GM12878 (cell line): ENCODE measurements at regions of chr6 and their contacts with region 1.

Region 1: DNA sequence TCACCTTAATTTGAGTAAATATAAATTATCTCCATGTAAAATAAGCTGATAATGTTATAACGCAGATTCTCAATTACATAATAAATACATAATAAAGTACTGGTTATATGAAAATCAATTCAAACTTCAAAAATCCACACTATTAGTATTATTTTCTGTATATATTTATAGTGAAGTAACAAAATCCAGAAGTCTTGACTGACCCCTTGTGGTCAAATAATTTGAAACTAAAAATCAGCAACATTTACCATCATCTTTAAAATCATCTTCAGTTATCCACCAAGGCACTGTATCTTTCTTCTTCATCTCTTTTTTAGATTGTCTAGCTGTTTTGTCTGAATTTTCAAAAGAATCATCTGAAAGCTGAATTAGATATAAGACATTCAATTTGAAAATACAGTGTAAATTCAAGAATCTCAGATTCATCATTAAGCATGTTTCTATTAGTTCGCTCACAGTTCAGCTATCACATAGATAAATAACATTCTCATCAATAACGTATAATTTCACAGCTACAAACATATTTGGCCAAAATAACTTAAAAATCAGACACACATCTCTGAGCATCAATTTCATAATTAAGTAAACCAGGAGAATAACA is 6.5 kb downstream of the CEP162 start:
- DNase-seq: no peak
- ATAC-seq: 0 out of 3 replicates have a peak, but pooled peaks have one; percentile 39
- H3K4me3 ChIP-seq: no peak overlapping the region
- H3K27ac ChIP-seq: no peak overlapping the region
- H3K4me1 ChIP-seq: no peaks in the 10 kb centered on the region
- H3K27me3 ChIP-seq: no peaks in the 10 kb centered on the region
- CTCF ChIP-seq: peak; percentile 30 to 52 (median 36); a peak in 3 of 6 replicates
- EP300 ChIP-seq: no peak
- POLR2A ChIP-seq: no peak
- RAD21 ChIP-seq: peak; percentile 64

Region 2: DNA sequence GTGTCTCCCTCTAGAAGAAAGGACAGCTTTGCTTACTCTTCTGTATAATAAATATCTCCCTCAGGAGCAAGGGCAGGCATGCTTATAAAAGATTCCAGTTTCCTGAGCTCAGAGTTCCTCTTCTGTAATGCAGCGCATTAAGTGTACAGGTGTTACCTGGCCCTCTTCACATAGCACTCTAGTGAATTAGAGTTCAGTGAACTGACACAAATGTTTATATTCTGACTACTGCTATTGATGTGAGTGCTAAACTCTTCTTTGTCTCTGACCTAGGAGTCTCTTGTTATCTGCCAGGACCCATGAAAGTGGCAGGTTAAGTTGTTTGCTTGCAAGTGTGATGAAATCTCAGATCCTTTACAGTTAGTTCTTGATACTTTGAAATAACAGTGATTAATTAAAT is 327.9 kb before region 1 on chr6:
- CTCF ChIA-PET with region 1: interaction called, 10 read pairs
- POLR2A ChIA-PET with region 1: no interaction called
- RAD21 ChIA-PET with region 1: interaction called, 5 read pairs
- SMC1A ChIA-PET with region 1: interaction called, 4 read pairs
- in situ Hi-C with region 1: loop called (anchors 5 kb)
- intact Hi-C with region 1: no loop called
- DNase-seq: no peak
- ATAC-seq: no peak
- H3K4me3 ChIP-seq: no peak overlapping the region
- H3K27ac ChIP-seq: no peak overlapping the region
- H3K4me1 ChIP-seq: no peaks in the 10 kb centered on the region
- H3K27me3 ChIP-seq: no peaks in the 10 kb centered on the region
- CTCF ChIP-seq: no peak
- EP300 ChIP-seq: no peak
- POLR2A ChIP-seq: no peak
- RAD21 ChIP-seq: no peak

Region 3: DNA sequence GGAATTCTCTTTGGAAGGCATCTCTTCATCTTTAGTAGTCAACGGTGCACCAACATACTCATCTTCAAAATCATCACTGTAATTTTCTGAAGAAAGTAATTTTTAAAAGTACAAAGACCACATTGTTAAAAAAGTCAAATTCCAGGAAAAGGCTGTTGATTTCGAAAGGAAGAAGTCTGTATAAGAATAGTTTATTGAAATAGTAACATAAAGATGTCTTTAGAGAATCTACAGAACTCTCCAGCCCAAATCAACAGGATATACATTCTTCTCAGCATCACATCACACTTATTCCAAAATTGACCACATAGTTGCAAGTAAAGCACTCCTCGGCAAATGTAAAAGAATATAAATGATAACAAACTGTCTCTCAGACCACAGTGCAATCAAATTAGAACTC is 16.9 kb before region 1 on chr6:
- CTCF ChIA-PET with region 1: interaction called, 3 read pairs
- POLR2A ChIA-PET with region 1: no interaction called
- RAD21 ChIA-PET with region 1: interaction called, 3 read pairs
- SMC1A ChIA-PET with region 1: interaction called, 10 read pairs
- in situ Hi-C with region 1: no loop called
- intact Hi-C with region 1: no loop called
- DNase-seq: no peak
- ATAC-seq: no peak
- H3K4me3 ChIP-seq: no peak overlapping the region
- H3K27ac ChIP-seq: no peak overlapping the region
- H3K4me1 ChIP-seq: no peaks in the 10 kb centered on the region
- H3K27me3 ChIP-seq: no peaks in the 10 kb centered on the region
- CTCF ChIP-seq: no peak
- EP300 ChIP-seq: no peak
- POLR2A ChIP-seq: no peak
- RAD21 ChIP-seq: no peak